Psoas muscle (tissue), 8 donors: ENCODE measurements at regions of chr1 and their contacts with region 1.

Region 1: GRCh38 chr1:67685067-67685557 is at the start of gene GADD45A:
- DNase-seq: peak; percentile 98 to 99
- ATAC-seq: peak; percentile 80 to 86 (median 85)
- H3K4me3 ChIP-seq: peak within 1 kb of the TSS; percentile 88
- H3K27ac ChIP-seq: peak within 1 kb of the TSS; percentile 96
- H3K4me1 ChIP-seq: peaks cover 20% of the 10 kb centered on the region
- H3K27me3 ChIP-seq: no peaks in the 10 kb centered on the region
- CTCF ChIP-seq: no peak
- total RNA-seq, gene GADD45A: 93.5 to 505 (median 230) TPM

Region 2: GRCh38 chr1:67535474-67535873 is 149.6 kb before region 1 on chr1:
- intact Hi-C with region 1: loop called in 1 of 2 experiments (anchors 5 kb)
- DNase-seq: peak; percentile 77 to 85
- ATAC-seq: peak; percentile 90 to 93 (median 92)
- H3K4me3 ChIP-seq: no peak overlapping the region
- H3K27ac ChIP-seq: no peak overlapping the region
- H3K4me1 ChIP-seq: peaks cover 11% of the 10 kb centered on the region
- H3K27me3 ChIP-seq: no peaks in the 10 kb centered on the region
- CTCF ChIP-seq: peak; percentile 95

Region 3: DNA sequence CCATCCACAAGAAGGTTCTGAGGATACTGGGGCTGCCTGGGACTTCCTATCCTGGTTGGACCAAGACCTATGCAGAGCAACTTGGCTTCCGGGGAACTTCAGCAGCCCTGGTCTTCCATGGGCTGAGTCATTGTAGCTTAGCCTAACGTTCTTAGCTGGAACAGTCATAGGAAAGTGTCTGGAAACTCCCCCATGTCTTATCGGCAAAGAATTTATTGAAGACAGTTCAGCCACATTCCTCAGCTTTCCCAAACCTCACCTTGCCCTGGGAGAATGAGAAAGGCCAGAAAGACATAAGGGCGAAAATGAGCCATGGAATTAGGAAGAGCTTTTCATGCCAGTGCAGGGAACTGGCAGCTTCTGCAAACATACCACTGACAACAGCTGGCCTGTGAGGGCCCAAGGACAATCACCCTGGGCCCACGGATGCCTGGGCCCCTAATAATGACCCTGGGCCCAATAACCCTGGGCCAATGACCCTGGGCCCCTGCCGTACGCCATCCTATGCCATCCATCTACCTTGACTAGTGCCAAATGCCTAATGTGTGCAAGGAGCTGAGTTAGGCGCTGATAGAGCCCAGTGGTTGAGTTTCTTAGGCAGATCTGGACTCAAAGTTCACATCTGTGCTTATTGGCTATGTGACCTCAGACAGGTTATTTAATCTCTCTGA is 114.5 kb before region 1 on chr1:
- intact Hi-C with region 1: loop called in 1 of 2 experiments (anchors 1 kb)
- DNase-seq: no peak
- ATAC-seq: peak; percentile 22 to 57 (median 33)
- H3K4me3 ChIP-seq: no peak overlapping the region
- H3K27ac ChIP-seq: peak overlapping the region; percentile 93
- H3K4me1 ChIP-seq: peaks cover 43% of the 10 kb centered on the region
- H3K27me3 ChIP-seq: no peaks in the 10 kb centered on the region
- CTCF ChIP-seq: no peak

Region 4: DNA sequence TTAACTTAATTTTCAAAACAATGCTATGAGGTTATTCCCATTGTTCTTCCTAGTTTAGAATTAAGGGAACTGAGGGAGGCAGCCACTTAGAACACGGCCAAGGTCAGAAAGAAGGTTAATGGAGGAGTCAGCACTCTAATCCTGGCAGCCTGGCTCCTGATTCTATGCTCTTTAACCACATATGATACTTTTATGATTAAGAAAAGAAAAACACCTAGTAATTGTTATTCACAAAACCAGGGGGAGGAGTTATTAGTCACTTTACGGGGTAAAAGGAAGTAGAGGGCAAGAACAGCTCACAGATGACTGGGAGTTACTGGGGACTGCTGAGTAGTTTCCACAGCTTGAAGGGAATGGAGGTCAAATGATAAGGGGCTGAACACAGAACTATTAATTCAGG is 38.5 kb after region 1 on chr1:
- intact Hi-C with region 1: loop called in 1 of 2 experiments (anchors 2 kb)
- DNase-seq: no peak
- ATAC-seq: peak in 3 of 4 donors; percentile 29 to 44 (median 39)
- H3K4me3 ChIP-seq: no peak overlapping the region
- H3K27ac ChIP-seq: no peak overlapping the region
- H3K4me1 ChIP-seq: peaks cover 23% of the 10 kb centered on the region
- H3K27me3 ChIP-seq: no peaks in the 10 kb centered on the region
- CTCF ChIP-seq: no peak

Region 5: GRCh38 chr1:67735806-67736627 is 50.9 kb after region 1 on chr1:
- intact Hi-C with region 1: no loop called
- DNase-seq: peak; percentile 74 to 78
- ATAC-seq: peak; percentile 58 to 81 (median 80)
- H3K4me3 ChIP-seq: peak overlapping the region; percentile 22
- H3K27ac ChIP-seq: peak overlapping the region; percentile 46
- H3K4me1 ChIP-seq: peaks cover 11% of the 10 kb centered on the region
- H3K27me3 ChIP-seq: no peaks in the 10 kb centered on the region
- CTCF ChIP-seq: no peak

Region 6: DNA sequence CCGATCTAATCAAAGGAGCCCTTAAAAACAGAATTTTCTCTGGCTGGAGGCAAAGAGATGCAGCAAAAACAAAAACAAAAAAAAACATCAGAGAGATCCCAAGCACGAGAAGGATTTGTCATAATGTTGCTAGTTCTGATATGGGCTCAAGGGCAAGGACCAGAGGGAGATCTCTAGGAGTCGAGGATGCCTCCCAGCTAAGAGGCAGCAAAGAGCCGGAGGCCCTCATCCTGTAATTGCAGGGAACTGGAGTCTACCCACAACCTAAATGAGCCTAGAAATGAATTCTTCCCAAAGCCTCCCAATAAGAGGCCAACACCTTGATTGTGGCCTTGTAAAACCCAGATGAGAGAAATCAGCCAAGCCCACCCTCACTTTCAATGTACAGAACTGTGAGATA is 136.2 kb after region 1 on chr1:
- intact Hi-C with region 1: no loop called
- DNase-seq: no peak
- ATAC-seq: no peak
- H3K4me3 ChIP-seq: no peak overlapping the region
- H3K27ac ChIP-seq: no peak overlapping the region
- H3K4me1 ChIP-seq: peaks cover 6% of the 10 kb centered on the region
- H3K27me3 ChIP-seq: no peaks in the 10 kb centered on the region
- CTCF ChIP-seq: no peak

Region 7: DNA sequence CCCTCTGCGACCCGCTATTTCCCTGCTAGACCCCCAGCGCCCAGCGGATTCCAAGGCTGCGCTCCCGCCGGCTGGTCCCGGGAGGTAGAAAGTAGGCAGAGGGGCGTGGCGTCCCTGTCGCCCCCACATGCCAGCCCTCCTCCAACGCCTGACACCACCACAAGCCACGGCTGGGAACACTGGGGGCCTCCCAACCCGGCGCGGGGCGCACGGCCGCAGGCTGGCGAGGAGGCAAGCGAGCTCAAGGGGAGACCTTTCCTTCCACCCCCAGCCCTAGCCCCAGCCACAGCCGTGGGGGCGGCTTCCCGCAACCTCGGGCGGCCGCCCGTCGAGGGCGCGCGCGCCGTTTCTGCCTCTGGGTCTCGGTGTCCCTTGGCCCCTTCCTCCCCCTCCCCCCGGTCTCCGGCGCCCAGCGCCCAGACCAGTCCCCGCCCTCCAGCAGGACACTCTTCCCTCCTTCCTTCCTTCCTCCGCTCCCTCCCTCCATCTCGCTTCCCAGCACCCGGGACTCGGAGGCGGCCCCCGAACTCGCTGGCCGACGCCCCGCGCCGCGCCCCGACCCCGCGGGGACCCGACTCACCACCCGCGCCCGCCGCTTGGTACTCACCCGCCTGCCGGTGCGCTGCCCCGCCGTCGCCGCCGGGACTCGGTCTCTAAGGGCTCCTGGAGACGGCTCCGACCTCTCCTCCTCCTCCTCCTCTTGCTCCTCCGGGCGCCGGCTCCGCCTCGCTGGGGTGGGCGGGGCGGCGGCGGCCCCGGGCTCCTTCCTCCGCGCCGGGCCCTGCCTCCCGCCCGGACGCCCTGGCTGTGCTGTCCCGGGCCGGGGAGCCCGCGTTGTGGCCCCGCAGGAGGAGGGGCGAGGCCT is 147.9 kb after region 1 on chr1 and contains the start of gene GNG12:
- intact Hi-C with region 1: loop called in 1 of 2 experiments (anchors 10 kb)
- DNase-seq: peak; percentile 74 to 84
- ATAC-seq: peak; percentile 79 to 82 (median 82)
- H3K4me3 ChIP-seq: peak within 1 kb of the TSS; percentile 91
- H3K27ac ChIP-seq: peak within 1 kb of the TSS; percentile 85
- H3K4me1 ChIP-seq: peaks cover 18% of the 10 kb centered on the region
- H3K27me3 ChIP-seq: no peaks in the 10 kb centered on the region
- CTCF ChIP-seq: no peak
- total RNA-seq, gene GNG12: 18.6 to 25.1 (median 20.3) TPM

Region 8: GRCh38 chr1:67908250-67908936 is 223.3 kb after region 1 on chr1:
- intact Hi-C with region 1: no loop called
- DNase-seq: no peak
- ATAC-seq: no peak
- H3K4me3 ChIP-seq: no peak overlapping the region
- H3K27ac ChIP-seq: no peak overlapping the region
- H3K4me1 ChIP-seq: no peaks in the 10 kb centered on the region
- H3K27me3 ChIP-seq: no peaks in the 10 kb centered on the region
- CTCF ChIP-seq: no peak